Ascending aorta (tissue), 2 donors: ENCODE measurements at regions of chr6 and their contacts with region 1.

Region 1: DNA sequence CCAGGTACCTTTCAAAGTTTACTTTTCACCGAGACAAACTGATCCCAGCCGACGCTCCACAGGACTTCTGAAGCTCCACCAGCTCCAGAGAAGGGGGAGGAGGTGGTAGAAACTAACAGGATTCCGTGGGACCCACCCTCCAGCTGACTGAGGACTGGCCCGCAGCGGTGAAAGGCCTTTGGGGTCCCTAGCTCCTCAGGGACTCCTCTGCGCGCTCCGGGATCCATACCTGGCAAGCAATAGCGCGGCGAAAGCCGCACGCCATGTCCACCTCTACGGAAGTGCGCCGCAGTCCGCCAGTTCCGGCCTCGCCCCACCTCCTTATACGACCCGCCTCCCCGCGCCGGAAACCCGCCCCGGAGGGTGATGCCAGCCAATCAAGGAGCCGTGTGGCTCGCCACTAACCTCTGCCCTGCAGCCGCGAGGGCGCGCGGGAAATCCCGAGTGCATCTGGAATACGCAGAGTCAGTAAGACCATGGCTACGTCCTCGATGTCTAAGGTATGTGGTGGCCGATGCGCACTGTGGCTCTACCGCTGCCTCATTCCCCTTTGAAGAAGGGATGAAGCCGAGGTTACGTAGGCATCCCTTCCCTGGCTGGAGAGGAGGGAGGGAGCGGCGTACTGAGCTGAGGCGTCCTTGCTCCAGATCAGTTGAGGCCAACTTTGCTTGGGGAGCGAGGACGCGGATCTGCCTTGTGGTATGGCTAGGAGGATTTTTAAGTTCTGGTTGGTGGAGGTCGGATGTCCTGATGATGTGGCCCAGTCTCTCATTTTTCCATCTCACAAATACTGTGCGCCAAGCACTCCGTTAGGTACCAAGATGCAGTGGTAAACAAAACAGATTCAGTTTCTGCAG is at the starts of genes ORC3 and RARS2:
- DNase-seq: peak; percentile 88 to 98
- H3K4me3 ChIP-seq: peak within 1 kb of the TSS; percentile 83 to 94
- H3K27ac ChIP-seq: peak within 1 kb of the TSS; percentile 72 to 85
- H3K4me1 ChIP-seq: peaks cover 3 to 21% of the 10 kb centered on the region in 2 donors
- H3K27me3 ChIP-seq: no peaks in the 10 kb centered on the region
- CTCF ChIP-seq: no peak
- total RNA-seq, gene ORC3: 12.9 TPM
- total RNA-seq, gene RARS2: 1.7 TPM

Region 2: DNA sequence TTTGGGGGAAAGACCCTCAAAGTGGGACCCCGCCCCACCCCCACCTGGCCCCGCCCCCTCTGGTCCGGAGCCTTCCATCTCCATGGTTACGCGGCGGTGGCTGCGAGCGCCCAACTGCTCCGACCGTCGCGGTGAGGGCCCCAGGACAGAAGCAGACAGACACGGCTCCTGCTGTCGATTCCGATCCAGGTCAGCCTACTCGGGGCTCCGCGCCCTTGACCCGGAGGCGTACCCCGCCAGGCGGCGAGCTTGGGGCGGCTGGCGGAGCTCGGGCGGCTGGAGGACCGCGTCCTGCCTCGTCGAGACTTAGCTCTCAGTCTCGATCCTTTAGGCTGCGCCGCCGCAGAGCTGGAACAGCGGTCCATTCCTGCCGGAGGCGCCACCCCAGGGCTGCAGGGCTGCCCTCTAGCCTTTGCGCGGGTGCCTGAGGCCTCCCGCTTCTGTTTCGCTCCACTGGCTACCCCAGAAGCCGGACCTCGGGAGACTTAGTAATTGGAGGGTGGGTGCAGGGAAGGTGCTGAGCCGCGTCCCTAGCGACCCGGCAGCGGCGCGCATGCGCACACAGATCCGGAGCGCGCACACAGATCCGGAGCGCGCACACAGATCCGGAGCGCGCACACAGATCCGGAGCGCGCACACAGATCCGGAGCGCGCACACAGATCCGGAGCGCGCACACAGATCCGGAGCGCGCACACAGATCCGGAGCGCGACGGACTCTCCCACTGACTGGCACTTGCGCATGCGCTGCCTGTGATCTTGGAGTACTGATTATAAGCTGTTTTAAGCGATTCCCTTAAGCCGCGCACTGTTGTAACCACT is 181.8 kb before region 1 on chr6 and contains the start of gene CFAP206:
- intact Hi-C with region 1: loop called (anchors 1 kb)
- DNase-seq: peak; percentile 21 to 88
- H3K4me3 ChIP-seq: peak within 1 kb of the TSS; percentile 84 to 93
- H3K27ac ChIP-seq: peak within 1 kb of the TSS; percentile 75 to 83
- H3K4me1 ChIP-seq: no peaks in the 10 kb centered on the region
- H3K27me3 ChIP-seq: no peaks in the 10 kb centered on the region
- CTCF ChIP-seq: peak in 1 of 3 experiments; percentile 5
- total RNA-seq, gene CFAP206: 1.4 TPM

Region 3: GRCh38 chr6:87472525-87473418 is 117.1 kb before region 1 on chr6 and contains the start of gene SLC35A1:
- intact Hi-C with region 1: loop called (anchors 2 kb)
- DNase-seq: peak; percentile 30 to 92
- H3K4me3 ChIP-seq: peak within 1 kb of the TSS; percentile 85 to 96
- H3K27ac ChIP-seq: peak within 1 kb of the TSS; percentile 82 to 93
- H3K4me1 ChIP-seq: peaks cover 0 to 3% of the 10 kb centered on the region in 2 donors
- H3K27me3 ChIP-seq: no peaks in the 10 kb centered on the region
- CTCF ChIP-seq: peak in 1 of 3 experiments; percentile 15
- total RNA-seq, gene SLC35A1: 7.9 TPM

Region 4: DNA sequence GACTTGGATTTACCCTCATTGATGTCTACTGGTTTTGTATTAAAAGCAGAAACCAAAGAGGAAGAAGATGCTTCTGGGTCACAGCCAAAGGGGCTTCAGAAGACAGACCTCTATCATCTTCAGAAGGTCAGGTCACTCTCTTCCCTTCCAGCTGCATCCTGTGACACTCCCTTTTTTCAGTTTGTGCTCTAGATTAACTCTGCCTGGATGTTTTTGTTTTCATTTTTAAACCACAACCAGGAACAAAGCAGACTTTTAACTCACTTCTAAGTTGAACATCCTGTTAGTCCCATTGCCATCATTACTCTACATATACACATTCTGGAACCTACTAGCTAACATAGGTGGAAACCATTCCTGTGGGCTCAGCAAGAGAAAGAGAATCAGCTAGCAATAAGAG is 66.9 kb after region 1 on chr6:
- intact Hi-C with region 1: loop called (anchors 2 kb)
- DNase-seq: no peak
- H3K4me3 ChIP-seq: no peak overlapping the region
- H3K27ac ChIP-seq: no peak overlapping the region
- H3K4me1 ChIP-seq: peaks cover 0 to 13% of the 10 kb centered on the region in 2 donors
- H3K27me3 ChIP-seq: no peaks in the 10 kb centered on the region
- CTCF ChIP-seq: no peak